HepG2 (cell line): ENCODE measurements at regions of chr12 and their contacts with region 1.

Region 1: GRCh38 chr12:23055004-23055403 is 430.0 kb downstream of the ETNK1 start:
- DNase-seq: peak; percentile 24
- ATAC-seq: peak; percentile 59
- H3K4me3 ChIP-seq: no peak overlapping the region
- H3K27ac ChIP-seq: no peak overlapping the region
- H3K4me1 ChIP-seq: no peaks in the 10 kb centered on the region
- H3K27me3 ChIP-seq: no peaks in the 10 kb centered on the region
- CTCF ChIP-seq: peak; percentile 67
- EP300 ChIP-seq: no peak
- POLR2A ChIP-seq: no peak
- RAD21 ChIP-seq: 0 out of 2 replicates have a peak, but pooled peaks have one; percentile 23

Region 2: GRCh38 chr12:22684140-22685118 is 370.6 kb before region 1 on chr12:
- CTCF ChIA-PET with region 1: no interaction called
- POLR2A ChIA-PET with region 1: no interaction called
- in situ Hi-C with region 1: no loop called
- intact Hi-C with region 1: loop called (anchors 10 kb)
- DNase-seq: peak; percentile 17
- ATAC-seq: peak; percentile 48; the same call in 2 of the 3 replicates
- H3K4me3 ChIP-seq: no peak overlapping the region
- H3K27ac ChIP-seq: no peak overlapping the region
- H3K4me1 ChIP-seq: peaks cover 7% of the 10 kb centered on the region; the same call in 1 of the 2 replicates
- H3K27me3 ChIP-seq: no peaks in the 10 kb centered on the region
- CTCF ChIP-seq: peak; percentile 40
- EP300 ChIP-seq: no peak
- POLR2A ChIP-seq: no peak
- RAD21 ChIP-seq: no peak

Region 3: DNA sequence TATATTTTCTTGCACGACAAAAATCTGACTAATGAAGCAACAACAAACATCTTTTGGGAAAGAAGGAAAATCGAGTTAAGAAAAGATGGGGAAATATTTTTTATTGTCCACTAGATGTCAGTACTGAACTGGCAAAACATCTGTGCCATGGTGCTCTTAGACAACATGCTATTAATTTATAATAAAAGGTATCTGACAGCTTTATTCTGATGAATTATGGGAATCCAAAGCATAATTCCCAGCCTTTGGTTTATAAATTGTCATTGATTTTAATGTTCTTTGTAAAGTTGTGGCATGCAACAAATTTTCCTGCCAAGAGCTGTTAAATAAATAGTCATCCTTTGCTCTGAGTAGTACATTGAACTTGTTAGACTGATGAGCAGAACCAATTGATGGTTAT is 198.8 kb before region 1 on chr12:
- CTCF ChIA-PET with region 1: interaction called, 14 read pairs
- POLR2A ChIA-PET with region 1: no interaction called
- in situ Hi-C with region 1: no loop called
- intact Hi-C with region 1: loop called (anchors 1 kb)
- DNase-seq: peak; percentile 20
- ATAC-seq: no peak
- H3K4me3 ChIP-seq: no peak overlapping the region
- H3K27ac ChIP-seq: no peak overlapping the region
- H3K4me1 ChIP-seq: no peaks in the 10 kb centered on the region
- H3K27me3 ChIP-seq: no peaks in the 10 kb centered on the region
- CTCF ChIP-seq: peak; percentile 59
- EP300 ChIP-seq: no peak
- POLR2A ChIP-seq: no peak
- RAD21 ChIP-seq: 0 out of 2 replicates have a peak, but pooled peaks have one; percentile 18

Region 4: DNA sequence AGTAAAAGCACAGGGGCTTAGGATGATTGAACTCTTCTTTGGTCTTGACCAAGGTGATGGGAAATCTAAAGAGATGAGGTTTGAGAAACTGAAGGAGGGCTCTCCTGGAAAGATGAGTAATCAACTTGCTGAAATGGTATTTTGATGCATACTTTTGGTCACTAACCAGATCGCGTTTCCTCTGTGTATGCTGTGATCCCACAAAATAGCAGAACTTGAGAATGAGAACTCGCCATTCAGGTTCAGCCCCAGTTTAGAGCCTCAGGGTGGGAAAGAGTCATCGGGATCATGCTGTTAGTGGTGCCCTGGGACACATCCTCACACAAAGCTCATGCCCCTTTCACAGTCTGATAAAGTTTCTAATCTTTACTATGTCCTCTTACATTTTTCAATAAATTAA is 58.8 kb after region 1 on chr12:
- CTCF ChIA-PET with region 1: no interaction called
- POLR2A ChIA-PET with region 1: no interaction called
- in situ Hi-C with region 1: no loop called
- intact Hi-C with region 1: no loop called
- DNase-seq: no peak
- ATAC-seq: no peak
- H3K4me3 ChIP-seq: no peak overlapping the region
- H3K27ac ChIP-seq: no peak overlapping the region
- H3K4me1 ChIP-seq: no peaks in the 10 kb centered on the region
- H3K27me3 ChIP-seq: no peaks in the 10 kb centered on the region
- CTCF ChIP-seq: no peak
- EP300 ChIP-seq: no peak
- POLR2A ChIP-seq: no peak
- RAD21 ChIP-seq: no peak

Region 5: DNA sequence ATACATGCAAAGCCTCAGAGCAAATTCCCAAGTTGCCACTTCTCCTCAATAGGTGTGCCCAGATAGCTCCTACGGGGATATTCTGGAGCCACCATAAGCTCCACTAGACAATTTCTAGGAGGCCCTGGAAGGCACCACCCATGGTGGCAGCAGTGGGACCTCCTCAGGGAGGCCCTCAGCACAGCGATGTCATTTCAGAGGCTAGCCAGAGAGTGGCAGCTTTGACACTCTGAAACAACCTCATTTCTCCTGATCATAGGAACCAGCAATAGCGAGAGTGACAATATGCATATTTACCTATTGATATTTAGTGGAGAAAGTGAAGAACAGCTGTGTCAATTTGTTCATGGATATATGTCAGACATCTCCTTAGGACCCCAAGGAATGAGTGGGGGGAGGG is 282.2 kb after region 1 on chr12:
- CTCF ChIA-PET with region 1: no interaction called
- POLR2A ChIA-PET with region 1: no interaction called
- in situ Hi-C with region 1: no loop called
- intact Hi-C with region 1: no loop called
- DNase-seq: no peak
- ATAC-seq: no peak
- H3K4me3 ChIP-seq: no peak overlapping the region
- H3K27ac ChIP-seq: no peak overlapping the region
- H3K4me1 ChIP-seq: no peaks in the 10 kb centered on the region
- H3K27me3 ChIP-seq: no peaks in the 10 kb centered on the region
- CTCF ChIP-seq: no peak
- EP300 ChIP-seq: no peak
- POLR2A ChIP-seq: no peak
- RAD21 ChIP-seq: no peak